ENCODE measurements at regions of chr2 and their contacts with region 1.

Region 1: GRCh38 chr2:191878576-191879279 is 31.8 kb upstream of the CAVIN2 start:
- DNase-seq: no peak

Region 2: DNA sequence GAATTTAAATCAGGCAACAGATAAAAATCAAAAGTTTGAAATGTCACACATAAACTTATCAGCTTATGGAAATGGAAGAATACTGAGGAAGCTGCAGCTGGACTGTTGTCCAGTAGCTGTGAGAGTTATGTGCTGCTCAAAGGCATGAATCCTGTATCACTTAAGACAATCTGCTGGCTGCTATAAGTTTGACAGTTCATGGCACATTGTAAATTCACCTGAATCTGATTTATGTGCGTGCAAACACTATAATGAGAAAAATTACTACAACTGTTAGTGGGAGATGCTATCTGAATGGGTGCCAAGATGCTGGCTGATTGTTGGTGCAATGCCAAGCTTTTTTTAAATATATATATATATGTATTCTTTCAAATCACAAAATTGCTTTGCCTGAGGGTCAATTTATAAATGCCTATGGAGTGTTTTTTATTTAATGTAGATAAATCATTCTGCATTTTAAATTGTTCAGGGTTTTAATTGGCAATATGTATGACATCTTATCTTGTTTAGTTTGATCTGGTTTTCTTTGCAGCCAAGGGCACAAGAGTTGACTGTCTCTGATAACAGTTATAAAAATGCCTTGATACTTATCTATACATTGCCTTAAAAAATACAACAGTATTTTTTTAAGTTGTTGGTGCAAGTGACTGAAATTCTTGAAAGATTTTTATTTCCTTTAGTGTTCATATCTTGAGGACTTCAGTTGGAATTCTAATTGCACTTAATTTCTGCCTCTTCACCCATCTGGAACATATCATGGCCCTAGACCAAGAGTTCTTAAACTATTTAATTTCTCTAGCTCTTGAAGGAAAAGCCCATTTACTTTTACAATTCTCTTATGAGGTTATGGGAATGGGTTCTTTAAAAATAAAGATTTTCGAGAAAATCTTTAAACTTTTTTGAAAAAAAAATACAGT is 80.5 kb before region 1 on chr2:
- intact Hi-C with region 1: no loop called
- DNase-seq: no peak

Region 3: DNA sequence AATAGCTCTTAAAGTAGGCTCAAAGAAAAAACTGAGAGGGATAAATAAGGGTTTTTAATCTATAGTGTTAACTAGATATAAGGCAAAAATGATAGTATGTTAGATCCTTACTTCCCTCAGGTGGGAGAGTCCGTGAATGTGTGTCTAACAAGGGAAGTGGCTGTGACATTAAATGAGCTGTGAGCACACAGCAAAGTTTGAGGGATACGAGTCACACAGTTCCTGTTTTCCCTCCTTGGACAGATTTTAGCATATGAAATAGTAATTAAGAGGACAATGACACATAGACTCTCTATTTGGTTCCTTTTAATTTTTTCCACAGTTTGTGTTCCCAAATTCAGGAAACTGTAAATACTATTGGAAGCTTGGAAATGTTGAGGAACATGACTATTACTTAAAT is 116.6 kb after region 1 on chr2:
- intact Hi-C with region 1: no loop called
- DNase-seq: no peak

Region 4: GRCh38 chr2:192286093-192286701 is 407.5 kb after region 1 on chr2:
- intact Hi-C with region 1: loop called (anchors 10 kb)
- DNase-seq: peak in 6 of 10 donors; percentile 4 to 81 (median 30)